PC-9 (cell line): ENCODE measurements at regions of chr12 and their contacts with region 1.

Region 1: DNA sequence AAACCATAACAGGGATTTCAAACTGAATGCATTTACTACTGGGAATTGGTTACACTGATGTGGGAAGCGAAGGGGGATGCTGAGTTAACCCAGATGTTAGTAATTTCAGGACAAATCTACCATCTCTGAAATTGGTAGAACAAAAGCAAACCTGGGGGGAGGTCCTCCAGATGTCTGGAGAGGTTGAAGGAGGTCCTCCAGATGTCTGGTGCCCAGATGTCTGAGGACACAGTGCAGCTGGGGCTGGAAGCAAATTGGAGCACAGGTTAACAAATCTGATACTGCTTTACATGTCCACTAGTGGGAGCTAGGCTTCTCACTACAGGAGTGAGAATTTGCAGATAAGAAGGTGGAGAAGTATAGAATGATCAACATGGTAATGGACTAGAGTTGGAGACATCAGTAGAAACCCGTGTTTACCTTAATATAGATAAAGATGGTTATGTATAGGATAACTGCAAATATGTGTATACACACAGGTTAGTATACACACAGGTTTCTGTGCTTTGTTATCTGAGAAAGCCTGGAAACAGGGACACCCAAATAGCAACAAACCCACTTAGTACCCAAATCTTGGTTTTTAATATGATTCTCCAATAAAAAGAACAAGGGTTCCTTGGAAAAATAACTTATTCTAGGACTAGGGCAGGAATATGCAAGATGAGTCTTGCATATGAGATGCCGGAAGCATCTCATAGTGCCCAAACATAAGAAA is 162.5 kb downstream of the C12orf50 start:
- DNase-seq: no peak
- H3K4me3 ChIP-seq: no peak overlapping the region
- H3K27ac ChIP-seq: no peak overlapping the region
- H3K4me1 ChIP-seq: no peaks in the 10 kb centered on the region
- H3K27me3 ChIP-seq: no peaks in the 10 kb centered on the region
- CTCF ChIP-seq: peak; percentile 52

Region 2: DNA sequence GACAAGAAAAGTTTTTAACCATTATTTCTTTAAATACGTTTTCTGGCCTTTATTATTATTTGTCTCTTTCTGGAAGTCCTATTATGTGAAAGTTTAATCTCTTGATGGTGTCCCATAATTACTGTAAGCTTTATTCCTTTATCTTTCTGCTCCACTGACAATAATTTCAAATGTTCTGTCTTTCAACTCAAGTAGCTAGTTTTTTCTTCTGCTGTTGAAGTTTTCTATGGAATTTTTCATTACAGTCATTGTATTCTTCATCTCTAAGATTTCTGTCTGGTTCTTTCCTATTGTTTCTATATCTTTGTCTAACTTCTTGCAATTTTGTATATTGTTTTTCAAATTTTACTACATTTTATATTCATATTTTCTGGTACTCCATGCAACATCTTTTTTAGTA is 1436.9 kb before region 1 on chr12:
- CTCF ChIA-PET with region 1: no interaction called
- POLR2A ChIA-PET with region 1: no interaction called
- intact Hi-C with region 1: loop called (anchors 10 kb)
- DNase-seq: no peak
- H3K4me3 ChIP-seq: no peak overlapping the region
- H3K27ac ChIP-seq: no peak overlapping the region
- H3K4me1 ChIP-seq: no peaks in the 10 kb centered on the region
- H3K27me3 ChIP-seq: no peaks in the 10 kb centered on the region
- CTCF ChIP-seq: no peak

Region 3: GRCh38 chr12:87995581-87996178 is 128.9 kb after region 1 on chr12:
- CTCF ChIA-PET with region 1: no interaction called
- POLR2A ChIA-PET with region 1: no interaction called
- intact Hi-C with region 1: loop called (anchors 10 kb)
- DNase-seq: peak; percentile 45 to 50
- H3K4me3 ChIP-seq: no peak overlapping the region
- H3K27ac ChIP-seq: no peak overlapping the region
- H3K4me1 ChIP-seq: no peaks in the 10 kb centered on the region
- H3K27me3 ChIP-seq: no peaks in the 10 kb centered on the region
- CTCF ChIP-seq: peak; percentile 89